CD8-positive, alpha-beta T cell (primary cell): ENCODE measurements at regions of chr6 and their contacts with region 1.

Region 1: DNA sequence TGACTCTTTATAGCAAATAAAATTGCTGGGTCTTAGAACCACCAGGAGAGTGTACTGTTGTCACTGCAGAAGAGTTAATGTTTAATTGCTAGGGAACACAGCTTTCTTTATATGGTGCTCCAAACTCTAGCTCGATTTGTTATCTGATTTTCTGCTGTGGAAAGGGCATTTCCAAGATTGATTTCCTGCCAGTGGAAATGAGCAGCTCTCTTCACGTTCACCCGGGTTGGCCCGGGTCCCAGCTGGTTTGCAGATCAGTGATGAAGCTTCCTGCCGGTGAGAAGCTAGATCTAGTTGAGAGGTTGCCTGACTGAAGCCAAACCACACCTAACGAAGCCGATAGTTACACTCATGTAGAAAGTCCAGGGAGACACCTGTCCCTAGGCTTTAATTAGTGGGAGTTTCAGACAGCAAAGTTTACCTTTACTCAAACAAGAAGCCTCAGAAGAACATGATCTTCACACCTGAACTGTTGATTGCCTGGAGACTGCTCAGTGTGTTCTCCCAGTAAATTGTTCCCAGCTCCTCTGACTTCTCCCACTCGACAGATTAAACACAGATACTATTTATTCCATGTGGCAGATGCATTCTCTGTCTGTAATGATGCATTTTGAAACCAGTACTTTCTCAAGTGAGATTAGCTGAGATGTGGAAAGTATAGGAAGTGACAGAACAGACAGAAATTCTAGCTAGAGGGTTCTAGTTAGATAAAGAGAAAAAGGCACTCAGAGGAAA is 27.8 kb downstream of the PAQR8 start:
- DNase-seq: peak in 8 of 9 experiments; percentile 37 to 84 (median 69)
- ATAC-seq: peak; percentile 39
- H3K4me3 ChIP-seq: peak overlapping the region; percentile 36 to 44
- H3K4me3 Mint-ChIP-seq: peak overlapping the region; percentile 83
- H3K27ac ChIP-seq: peak overlapping the region; percentile 78 to 79
- H3K27ac Mint-ChIP-seq: peak overlapping the region; percentile 98
- H3K4me1 ChIP-seq: peaks cover 71% of the 10 kb centered on the region
- H3K4me1 Mint-ChIP-seq: peaks cover 86% of the 10 kb centered on the region
- H3K27me3 ChIP-seq: no peaks in the 10 kb centered on the region
- H3K27me3 Mint-ChIP-seq: no peaks in the 10 kb centered on the region
- CTCF ChIP-seq: peak; percentile 30

Region 2: GRCh38 chr6:52304983-52305390 is 84.8 kb before region 1 on chr6:
- CTCF ChIA-PET with region 1: interaction called, 8 read pairs
- POLR2A ChIA-PET with region 1: interaction called, 4 read pairs
- intact Hi-C with region 1: loop called in 1 of 2 experiments (anchors 2 kb)
- DNase-seq: peak in 1 of 9 experiments; percentile 46
- ATAC-seq: peak; percentile 46
- H3K4me3 ChIP-seq: peak overlapping the region in 1 of 2 experiments; percentile 8
- H3K4me3 Mint-ChIP-seq: peak overlapping the region; percentile 58
- H3K27ac ChIP-seq: peak overlapping the region; percentile 38 to 78
- H3K27ac Mint-ChIP-seq: peak overlapping the region; percentile 88
- H3K4me1 ChIP-seq: peaks cover 71% of the 10 kb centered on the region
- H3K4me1 Mint-ChIP-seq: peaks cover 71% of the 10 kb centered on the region
- H3K27me3 ChIP-seq: no peaks in the 10 kb centered on the region
- H3K27me3 Mint-ChIP-seq: no peaks in the 10 kb centered on the region
- CTCF ChIP-seq: no peak

Region 3: DNA sequence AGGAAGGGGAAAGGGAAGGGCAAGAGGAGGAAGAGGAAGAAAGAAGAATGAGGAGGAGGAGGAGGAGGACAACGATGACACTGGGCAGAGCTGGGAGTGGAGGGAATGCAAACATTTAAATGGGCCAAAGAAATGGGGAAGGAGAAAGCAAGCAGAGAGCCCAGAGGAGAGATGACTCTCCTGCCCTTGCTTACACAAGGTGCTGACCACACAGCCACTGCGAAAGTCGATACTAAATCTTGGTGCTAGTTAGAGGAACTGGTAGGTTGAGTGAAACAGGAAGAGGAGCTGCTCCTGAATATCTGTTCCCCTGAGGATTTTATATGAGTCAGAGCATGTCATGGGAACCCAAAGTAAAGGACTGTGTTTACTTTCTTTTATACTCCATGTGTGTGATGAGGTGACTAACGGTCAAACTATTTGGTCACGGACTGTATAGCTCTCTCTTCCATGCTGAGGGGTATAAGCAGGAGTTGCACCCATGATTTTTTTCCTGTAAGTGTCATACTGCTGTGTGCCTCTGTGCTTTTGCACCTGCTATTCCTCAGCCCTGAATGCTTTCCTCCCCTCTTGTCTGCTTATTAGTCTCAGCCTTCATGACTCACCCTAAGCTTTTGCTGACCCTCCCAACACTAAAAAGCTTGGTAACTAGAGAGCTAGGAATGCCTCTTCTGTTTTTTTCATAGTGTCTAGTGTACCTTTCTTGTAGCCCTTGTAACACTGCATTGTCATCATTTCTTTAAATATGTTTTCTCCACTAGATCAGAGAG is 37.4 kb before region 1 on chr6:
- CTCF ChIA-PET with region 1: no interaction called
- POLR2A ChIA-PET with region 1: no interaction called
- intact Hi-C with region 1: no loop called
- DNase-seq: peak in 1 of 9 experiments; percentile 34
- ATAC-seq: no peak
- H3K4me3 ChIP-seq: no peak overlapping the region
- H3K4me3 Mint-ChIP-seq: no peak overlapping the region
- H3K27ac ChIP-seq: no peak overlapping the region
- H3K27ac Mint-ChIP-seq: no peak overlapping the region
- H3K4me1 ChIP-seq: peaks cover 9% of the 10 kb centered on the region
- H3K4me1 Mint-ChIP-seq: peaks cover 24% of the 10 kb centered on the region
- H3K27me3 ChIP-seq: no peaks in the 10 kb centered on the region
- H3K27me3 Mint-ChIP-seq: no peaks in the 10 kb centered on the region
- CTCF ChIP-seq: no peak

Region 4: DNA sequence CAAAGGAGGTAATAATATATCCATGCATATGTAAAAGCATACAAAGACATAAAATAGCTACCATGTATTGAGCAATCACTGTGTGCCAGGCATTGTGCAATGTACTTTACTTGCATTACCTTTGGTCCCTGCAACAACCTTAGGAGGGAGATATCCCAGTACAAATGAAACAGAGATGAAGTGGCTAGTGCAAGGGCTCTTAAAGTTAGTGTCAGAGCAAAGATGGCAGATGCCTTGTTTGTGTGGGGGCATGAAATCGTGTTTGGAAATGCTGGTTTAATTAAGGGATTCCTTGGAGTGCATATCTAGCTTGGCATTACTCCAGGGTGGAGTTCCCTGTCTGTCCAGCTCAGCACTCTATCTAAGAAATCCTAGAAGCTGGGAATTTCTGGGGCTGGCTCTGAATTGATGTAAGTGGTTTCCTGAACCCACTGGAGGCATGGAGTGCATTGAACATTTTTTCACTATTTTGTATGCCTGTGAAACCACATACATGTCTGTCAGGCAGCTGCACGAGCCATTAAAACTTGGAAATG is 18.1 kb before region 1 on chr6:
- CTCF ChIA-PET with region 1: interaction called, 38 read pairs
- POLR2A ChIA-PET with region 1: interaction called, 22 read pairs
- intact Hi-C with region 1: loop called in 1 of 2 experiments (anchors 1 kb)
- DNase-seq: no peak
- ATAC-seq: no peak
- H3K4me3 ChIP-seq: no peak overlapping the region
- H3K4me3 Mint-ChIP-seq: no peak overlapping the region
- H3K27ac ChIP-seq: peak overlapping the region in 1 of 2 experiments; percentile 15
- H3K27ac Mint-ChIP-seq: peak overlapping the region; percentile 78
- H3K4me1 ChIP-seq: peaks cover 46% of the 10 kb centered on the region
- H3K4me1 Mint-ChIP-seq: peaks cover 80% of the 10 kb centered on the region
- H3K27me3 ChIP-seq: no peaks in the 10 kb centered on the region
- H3K27me3 Mint-ChIP-seq: no peaks in the 10 kb centered on the region
- CTCF ChIP-seq: no peak

Region 5: GRCh38 chr6:52377538-52378221 is 12.1 kb before region 1 on chr6:
- CTCF ChIA-PET with region 1: interaction called, 38 read pairs
- POLR2A ChIA-PET with region 1: interaction called, 22 read pairs
- intact Hi-C with region 1: loop called in 1 of 2 experiments (anchors 1 kb)
- DNase-seq: peak in 1 of 9 experiments; percentile 37
- ATAC-seq: no peak
- H3K4me3 ChIP-seq: no peak overlapping the region
- H3K4me3 Mint-ChIP-seq: peak overlapping the region; percentile 44
- H3K27ac ChIP-seq: no peak overlapping the region
- H3K27ac Mint-ChIP-seq: peak overlapping the region; percentile 86
- H3K4me1 ChIP-seq: peaks cover 62% of the 10 kb centered on the region
- H3K4me1 Mint-ChIP-seq: peaks cover 73% of the 10 kb centered on the region
- H3K27me3 ChIP-seq: no peaks in the 10 kb centered on the region
- H3K27me3 Mint-ChIP-seq: no peaks in the 10 kb centered on the region
- CTCF ChIP-seq: no peak

Region 6: DNA sequence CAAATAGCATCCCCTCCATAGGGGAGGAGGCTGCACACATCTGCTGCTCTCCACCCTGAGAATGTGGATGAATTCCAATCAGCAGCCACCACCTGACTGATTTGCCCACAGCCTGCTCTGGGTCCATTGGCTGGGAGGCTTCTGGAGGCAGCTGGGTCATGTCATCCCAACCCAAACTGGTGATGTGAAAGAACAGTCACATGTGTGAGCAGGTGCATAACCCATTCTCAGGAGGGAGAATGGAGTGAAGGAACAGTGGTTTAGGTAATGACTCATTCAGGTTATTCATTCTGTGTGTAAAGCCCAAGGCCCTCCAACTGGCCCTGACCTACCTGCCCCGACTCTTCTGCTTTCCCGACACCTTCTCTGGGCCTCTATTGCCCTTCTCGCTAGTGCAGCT is 849.7 kb after region 1 on chr6:
- CTCF ChIA-PET with region 1: no interaction called
- POLR2A ChIA-PET with region 1: no interaction called
- intact Hi-C with region 1: no loop called
- DNase-seq: no peak
- ATAC-seq: no peak
- H3K4me3 ChIP-seq: no peak overlapping the region
- H3K4me3 Mint-ChIP-seq: no peak overlapping the region
- H3K27ac ChIP-seq: no peak overlapping the region
- H3K27ac Mint-ChIP-seq: no peak overlapping the region
- H3K4me1 ChIP-seq: peaks cover 15% of the 10 kb centered on the region
- H3K4me1 Mint-ChIP-seq: peaks cover 27% of the 10 kb centered on the region
- H3K27me3 ChIP-seq: no peaks in the 10 kb centered on the region
- H3K27me3 Mint-ChIP-seq: no peaks in the 10 kb centered on the region
- CTCF ChIP-seq: no peak